Activated CD4-positive, alpha-beta memory T cell treated with anti-CD3 and anti-CD28 coated beads, Interleukin-2, amount 10 ng/mL, durations not matched to agents 7 days and 5 days (primary cell): ENCODE measurements at regions of chr9 and their contacts with region 1.

Region 1: DNA sequence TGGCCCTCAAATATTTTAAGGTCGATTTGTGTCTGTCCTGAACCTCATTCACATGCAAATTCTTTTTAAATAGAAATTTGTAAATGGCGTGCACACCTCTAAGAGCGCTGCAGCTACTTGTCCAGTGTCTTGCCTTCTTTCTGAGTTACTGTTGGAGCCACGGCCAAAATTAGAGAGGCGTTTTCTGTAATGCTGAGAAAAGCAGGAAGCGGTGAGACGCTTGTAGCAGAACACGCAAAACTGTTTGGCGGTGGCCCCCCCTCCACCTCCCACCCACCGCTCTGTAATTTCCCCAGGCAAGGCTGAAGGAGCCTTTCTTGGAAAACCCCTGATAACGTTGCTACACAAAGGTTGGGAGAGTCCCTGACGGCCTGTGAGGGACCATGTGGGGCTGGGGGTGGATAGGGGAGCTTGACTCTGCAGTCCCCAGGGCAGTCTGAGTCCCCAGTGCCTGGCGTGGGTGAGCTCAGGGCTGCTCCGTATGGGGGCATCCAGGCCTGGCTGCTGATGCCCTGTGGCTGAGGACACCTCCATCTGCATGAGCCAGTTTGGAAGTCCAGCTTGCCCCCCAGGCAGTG is 96.5 kb downstream of the GADD45G start:
- DNase-seq: peak; percentile 80
- H3K4me3 Mint-ChIP-seq: peak overlapping the region; percentile 76
- H3K27ac Mint-ChIP-seq: peak overlapping the region; percentile 89
- H3K4me1 Mint-ChIP-seq: peaks cover 79% of the 10 kb centered on the region
- H3K27me3 Mint-ChIP-seq: no peaks in the 10 kb centered on the region

Region 2: DNA sequence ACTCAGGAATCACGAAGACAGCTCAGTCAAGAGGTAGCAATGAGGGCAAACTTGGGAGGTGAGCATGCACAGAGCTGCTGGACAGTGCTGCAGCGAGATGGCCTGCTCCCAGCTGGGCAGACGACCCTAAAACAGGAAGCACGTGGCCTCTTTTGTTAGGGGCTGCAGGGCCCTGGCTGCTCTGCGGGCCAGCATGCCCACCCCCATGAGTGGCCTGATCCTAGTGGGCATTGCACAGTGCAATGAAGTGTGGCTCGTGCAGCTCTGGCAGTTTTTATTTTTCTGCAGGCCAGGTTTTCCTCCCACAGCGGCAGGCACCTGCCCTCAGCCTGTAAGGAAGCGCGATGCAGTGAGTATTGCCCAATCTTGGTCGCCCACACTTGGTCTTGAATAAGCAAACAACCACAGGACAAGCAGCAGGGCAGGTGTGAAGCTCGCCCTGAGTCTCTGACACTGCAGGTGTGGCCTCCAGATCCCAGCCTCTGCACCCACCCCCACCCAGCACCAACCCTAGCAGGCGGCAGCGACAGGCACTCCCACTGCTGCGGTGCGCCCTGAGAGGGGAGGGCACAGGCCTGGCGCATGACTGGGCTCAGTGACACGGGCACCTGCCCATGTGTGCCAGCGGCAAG is 264.2 kb before region 1 on chr9:
- CTCF ChIA-PET with region 1: no interaction called
- POLR2A ChIA-PET with region 1: no interaction called
- DNase-seq: peak; percentile 60
- H3K4me3 Mint-ChIP-seq: no peak overlapping the region
- H3K27ac Mint-ChIP-seq: peak overlapping the region; percentile 74
- H3K4me1 Mint-ChIP-seq: peaks cover 83% of the 10 kb centered on the region
- H3K27me3 Mint-ChIP-seq: no peaks in the 10 kb centered on the region

Region 3: DNA sequence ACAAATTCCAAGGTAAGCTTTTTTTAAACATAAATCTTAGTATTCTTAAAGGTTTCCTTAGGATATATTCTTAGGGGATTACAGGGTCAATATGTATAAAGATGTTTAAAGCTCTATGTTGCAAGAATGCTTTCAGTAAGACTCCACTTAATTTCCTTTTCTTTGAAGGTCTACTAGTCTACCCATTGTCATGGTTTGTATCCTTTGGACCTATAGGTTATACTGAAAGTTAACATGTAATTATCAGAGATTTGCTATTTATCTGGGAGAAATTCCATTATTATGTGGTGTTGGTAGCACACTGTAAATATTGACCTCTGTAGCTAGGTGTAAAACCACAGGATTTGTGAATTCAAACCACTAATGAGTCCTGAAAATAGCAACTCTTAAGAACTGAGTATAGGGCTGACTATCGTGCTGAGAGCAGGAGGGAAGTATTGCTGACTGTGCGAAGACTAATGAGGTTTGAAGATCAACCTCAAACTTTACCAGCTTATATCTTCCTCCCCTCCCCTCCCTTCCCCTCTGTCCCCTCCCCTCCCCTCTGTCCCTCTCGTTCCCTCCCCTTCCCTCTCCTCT is 10.9 kb before region 1 on chr9:
- CTCF ChIA-PET with region 1: interaction called, 9 read pairs
- POLR2A ChIA-PET with region 1: interaction called, 47 read pairs
- DNase-seq: no peak
- H3K4me3 Mint-ChIP-seq: no peak overlapping the region
- H3K27ac Mint-ChIP-seq: peak overlapping the region; percentile 58
- H3K4me1 Mint-ChIP-seq: peaks cover 45% of the 10 kb centered on the region
- H3K27me3 Mint-ChIP-seq: no peaks in the 10 kb centered on the region